Naive thymus-derived CD4-positive, alpha-beta T cell (primary cell): ENCODE measurements at regions of chr19 and their contacts with region 1.

Region 1: GRCh38 chr19:35013031-35013819 is 13.1 kb downstream of the GRAMD1A start:
- DNase-seq: peak; percentile 73 to 87 (median 79)
- ATAC-seq: peak; percentile 83
- H3K4me3 ChIP-seq: peak overlapping the region; percentile 48
- H3K4me3 Mint-ChIP-seq: peak overlapping the region; percentile 76 to 94 (median 86)
- H3K27ac ChIP-seq: peak overlapping the region; percentile 75
- H3K27ac Mint-ChIP-seq: peak overlapping the region; percentile 76 to 99 (median 96)
- H3K4me1 ChIP-seq: peaks cover 57 to 59% of the 10 kb centered on the region in 2 donors
- H3K4me1 Mint-ChIP-seq: peaks cover 41 to 83% (median 67%) of the 10 kb centered on the region in 7 donors
- H3K27me3 ChIP-seq: no peaks in the 10 kb centered on the region
- H3K27me3 Mint-ChIP-seq: no peaks in the 10 kb centered on the region

Region 2: DNA sequence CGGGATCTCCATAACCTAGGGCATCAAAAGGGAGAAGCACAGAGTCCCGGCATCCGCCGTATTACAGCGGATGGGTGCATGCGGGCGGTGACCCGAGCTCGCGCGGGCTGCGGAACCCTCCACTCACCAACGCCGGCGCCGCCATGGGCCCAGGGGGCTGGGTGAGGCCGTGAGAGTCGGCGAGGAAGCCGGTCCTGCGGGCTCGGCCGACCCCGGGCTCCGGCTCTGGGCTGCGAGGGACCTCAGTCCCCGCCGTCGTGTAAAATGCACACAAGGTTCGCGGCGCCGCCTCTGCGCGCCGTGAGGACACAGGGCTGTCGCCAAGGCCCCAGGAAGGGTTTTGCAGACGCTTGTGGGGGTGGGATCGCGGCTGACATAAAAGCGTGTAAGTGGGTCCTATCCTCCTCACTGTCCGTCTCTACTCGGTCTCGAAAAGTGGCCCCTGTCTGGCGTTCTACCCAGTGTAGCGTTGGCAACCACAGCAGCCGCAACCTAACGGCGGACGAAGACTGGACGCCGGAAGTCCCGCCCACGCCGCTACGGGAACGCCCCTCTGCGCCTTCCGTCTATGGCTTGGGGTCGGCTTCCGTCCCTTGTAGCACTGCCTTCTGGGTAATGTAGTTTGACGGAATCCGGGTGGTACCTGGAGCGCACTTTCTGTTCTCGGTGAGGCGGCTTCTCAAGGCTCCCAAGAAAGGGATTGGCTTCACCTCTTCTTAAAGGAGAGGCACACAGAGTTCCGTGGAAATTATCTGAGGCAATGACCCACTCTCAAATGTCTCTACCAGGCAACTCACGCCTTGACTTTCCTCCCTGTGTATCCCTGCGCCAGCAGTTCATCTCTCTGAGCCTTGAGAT is 240.3 kb before region 1 on chr19 and contains the start of gene ZNF599:
- CTCF ChIA-PET with region 1: interaction called, 3 read pairs
- POLR2A ChIA-PET with region 1: interaction called, 3 read pairs
- intact Hi-C with region 1: loop called in 1 of 2 experiments (anchors 5 kb)
- DNase-seq: peak; percentile 72 to 89 (median 87)
- ATAC-seq: peak; percentile 99
- H3K4me3 ChIP-seq: peak within 1 kb of the TSS; percentile 88
- H3K4me3 Mint-ChIP-seq: peak within 1 kb of the TSS; percentile 92 to 99 (median 96)
- H3K27ac ChIP-seq: peak within 1 kb of the TSS; percentile 81
- H3K27ac Mint-ChIP-seq: peak within 1 kb of the TSS; percentile 84 to 97 (median 95)
- H3K4me1 ChIP-seq: peaks cover 7 to 10% of the 10 kb centered on the region in 2 donors
- H3K4me1 Mint-ChIP-seq: peaks cover 13 to 21% (median 20%) of the 10 kb centered on the region in 7 donors
- H3K27me3 ChIP-seq: no peaks in the 10 kb centered on the region
- H3K27me3 Mint-ChIP-seq: peaks cover 0 to 15% (median 5%) of the 10 kb centered on the region in 5 donors
- total RNA-seq, gene ZNF599: 2.9 to 11.6 (median 5.3) TPM

Region 3: GRCh38 chr19:34963573-34964409 is 49.4 kb before region 1 on chr19 and contains the start of gene ZNF792:
- CTCF ChIA-PET with region 1: interaction called, 138 read pairs
- POLR2A ChIA-PET with region 1: interaction called, 134 read pairs
- intact Hi-C with region 1: no loop called
- DNase-seq: peak; percentile 20 to 67 (median 36)
- ATAC-seq: peak; percentile 63
- H3K4me3 ChIP-seq: peak within 1 kb of the TSS; percentile 74
- H3K4me3 Mint-ChIP-seq: peak within 1 kb of the TSS; percentile 90 to 98 (median 96)
- H3K27ac ChIP-seq: peak within 1 kb of the TSS; percentile 80
- H3K27ac Mint-ChIP-seq: peak within 1 kb of the TSS; percentile 86 to 99 (median 93)
- H3K4me1 ChIP-seq: peaks cover 14 to 17% of the 10 kb centered on the region in 2 donors
- H3K4me1 Mint-ChIP-seq: peaks cover 21 to 42% (median 26%) of the 10 kb centered on the region in 7 donors
- H3K27me3 ChIP-seq: no peaks in the 10 kb centered on the region
- H3K27me3 Mint-ChIP-seq: peaks cover 0 to under 1% (median 0%) of the 10 kb centered on the region in 5 donors
- total RNA-seq, gene ZNF792: 11.0 to 33.9 (median 14.7) TPM

Region 4: GRCh38 chr19:34990578-34991192 is 22.5 kb before region 1 on chr19:
- CTCF ChIA-PET with region 1: interaction called, 8 read pairs
- POLR2A ChIA-PET with region 1: interaction called, 237 read pairs
- intact Hi-C with region 1: no loop called
- DNase-seq: peak in 1 of 9 donors; percentile 47
- ATAC-seq: no peak
- H3K4me3 ChIP-seq: no peak overlapping the region
- H3K4me3 Mint-ChIP-seq: peak overlapping the region in 1 of 10 donors; percentile 24
- H3K27ac ChIP-seq: no peak overlapping the region
- H3K27ac Mint-ChIP-seq: peak overlapping the region in 4 of 9 donors; percentile 3 to 48 (median 22)
- H3K4me1 ChIP-seq: peaks cover 5 to 11% of the 10 kb centered on the region in 2 donors
- H3K4me1 Mint-ChIP-seq: peaks cover 11 to 62% (median 23%) of the 10 kb centered on the region in 7 donors
- H3K27me3 ChIP-seq: no peaks in the 10 kb centered on the region
- H3K27me3 Mint-ChIP-seq: no peaks in the 10 kb centered on the region

Region 5: DNA sequence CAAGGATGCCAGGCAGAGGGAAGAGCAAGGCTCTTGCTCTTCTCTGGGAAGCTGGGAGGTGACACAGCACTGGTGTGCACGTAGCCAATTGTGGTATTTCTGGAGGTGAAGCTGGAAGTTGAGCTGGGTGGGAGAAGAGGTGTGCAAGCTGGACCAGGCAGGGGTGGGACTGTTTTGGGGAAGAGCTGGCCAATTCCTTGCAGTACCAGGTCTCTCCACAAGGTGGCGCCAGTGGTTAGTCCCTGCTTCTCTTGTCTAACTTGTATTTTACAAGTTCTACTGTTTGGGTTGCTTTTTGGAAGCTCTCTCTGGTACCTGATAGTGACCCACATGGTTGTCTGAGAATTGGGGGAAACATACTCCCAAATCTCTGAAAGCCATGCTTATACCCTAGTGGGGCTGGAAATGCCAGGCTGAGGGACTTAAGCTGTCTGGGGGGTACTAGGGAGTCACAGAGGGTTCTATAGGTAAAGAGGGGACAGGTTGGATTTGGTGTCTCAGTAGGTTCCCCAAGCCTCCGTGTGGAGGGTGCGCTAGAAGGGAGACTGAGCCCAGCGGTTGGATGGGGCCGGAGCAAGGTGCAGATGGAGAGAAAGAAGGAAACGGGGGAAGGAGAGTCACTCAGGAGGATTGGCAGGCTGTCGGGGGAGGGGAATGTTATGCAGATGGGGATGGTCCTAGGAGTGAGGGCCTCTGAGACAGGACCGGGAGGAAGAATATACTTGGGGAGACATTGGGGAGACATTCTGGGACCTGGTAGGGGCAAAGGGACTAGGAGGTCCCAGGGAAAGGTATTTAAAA is 31.3 kb after region 1 on chr19:
- CTCF ChIA-PET with region 1: interaction called, 12 read pairs
- POLR2A ChIA-PET with region 1: interaction called, 6 read pairs
- intact Hi-C with region 1: no loop called
- DNase-seq: peak in 7 of 9 donors; percentile 36 to 68 (median 50)
- ATAC-seq: peak; percentile 46
- H3K4me3 ChIP-seq: no peak overlapping the region
- H3K4me3 Mint-ChIP-seq: peak overlapping the region in 5 of 10 donors; percentile 24 to 49 (median 29)
- H3K27ac ChIP-seq: no peak overlapping the region
- H3K27ac Mint-ChIP-seq: peak overlapping the region in 6 of 9 donors; percentile 40 to 88 (median 68)
- H3K4me1 ChIP-seq: peaks cover 15 to 16% of the 10 kb centered on the region in 2 donors
- H3K4me1 Mint-ChIP-seq: peaks cover 30 to 43% (median 38%) of the 10 kb centered on the region in 7 donors
- H3K27me3 ChIP-seq: no peaks in the 10 kb centered on the region
- H3K27me3 Mint-ChIP-seq: peaks cover 0 to 29% (median 10%) of the 10 kb centered on the region in 5 donors

Region 6: DNA sequence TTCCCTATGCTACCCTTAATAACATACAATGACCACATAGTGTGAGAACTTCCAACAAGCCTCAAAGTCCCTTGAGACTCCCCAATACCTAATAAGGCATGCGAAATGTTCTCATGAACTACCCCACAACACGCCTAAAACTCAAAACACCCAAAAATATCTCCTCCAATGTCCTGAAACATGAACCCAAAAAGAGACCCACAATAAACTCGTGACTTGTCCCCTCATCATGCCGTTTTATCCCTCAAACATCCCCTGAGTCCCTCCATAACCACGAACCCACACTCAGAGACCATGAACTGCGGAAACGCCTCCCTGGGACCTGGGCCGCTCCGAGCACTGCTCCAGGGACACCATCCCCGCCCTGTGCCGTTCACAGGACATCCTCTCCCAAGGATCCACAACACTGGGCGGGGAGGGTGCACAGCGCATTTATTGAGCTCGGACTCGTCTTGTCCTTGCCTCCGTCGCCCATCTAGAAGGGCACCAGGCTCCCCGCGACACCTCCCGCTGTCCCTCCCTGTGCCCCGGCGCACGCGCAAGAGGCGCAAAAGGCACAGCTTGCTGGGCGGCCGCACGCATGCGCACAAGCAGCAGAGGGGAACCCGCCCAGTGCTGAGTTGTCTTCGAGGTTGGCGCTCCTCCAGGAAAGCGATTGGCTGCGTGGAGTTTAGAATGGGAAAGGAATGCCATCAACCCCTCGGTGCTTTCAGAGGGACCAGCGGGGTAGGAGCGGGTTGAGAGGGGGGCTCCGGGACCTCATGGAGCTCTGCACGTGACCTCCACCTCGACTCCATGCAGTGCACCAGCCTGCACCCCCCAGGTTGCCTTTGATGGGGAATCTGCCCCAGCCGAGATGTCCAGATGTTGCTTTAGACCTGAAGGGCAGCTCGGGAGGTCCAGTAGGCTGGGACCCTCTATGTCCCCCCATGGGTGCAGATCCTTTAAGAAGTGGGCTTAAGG is 111.2 kb after region 1 on chr19:
- CTCF ChIA-PET with region 1: no interaction called
- POLR2A ChIA-PET with region 1: no interaction called
- intact Hi-C with region 1: no loop called
- DNase-seq: peak; percentile 79 to 89 (median 85)
- ATAC-seq: peak; percentile 90
- H3K4me3 ChIP-seq: peak overlapping the region; percentile 69
- H3K4me3 Mint-ChIP-seq: peak overlapping the region; percentile 77 to 91 (median 85)
- H3K27ac ChIP-seq: peak overlapping the region; percentile 66
- H3K27ac Mint-ChIP-seq: peak overlapping the region; percentile 82 to 91 (median 88)
- H3K4me1 ChIP-seq: peaks cover 3 to 11% of the 10 kb centered on the region in 2 donors
- H3K4me1 Mint-ChIP-seq: peaks cover 12 to 17% (median 14%) of the 10 kb centered on the region in 7 donors
- H3K27me3 ChIP-seq: no peaks in the 10 kb centered on the region
- H3K27me3 Mint-ChIP-seq: no peaks in the 10 kb centered on the region